HEK293 (cell line): ENCODE measurements at regions of chr16 and their contacts with region 1.

Region 1: DNA sequence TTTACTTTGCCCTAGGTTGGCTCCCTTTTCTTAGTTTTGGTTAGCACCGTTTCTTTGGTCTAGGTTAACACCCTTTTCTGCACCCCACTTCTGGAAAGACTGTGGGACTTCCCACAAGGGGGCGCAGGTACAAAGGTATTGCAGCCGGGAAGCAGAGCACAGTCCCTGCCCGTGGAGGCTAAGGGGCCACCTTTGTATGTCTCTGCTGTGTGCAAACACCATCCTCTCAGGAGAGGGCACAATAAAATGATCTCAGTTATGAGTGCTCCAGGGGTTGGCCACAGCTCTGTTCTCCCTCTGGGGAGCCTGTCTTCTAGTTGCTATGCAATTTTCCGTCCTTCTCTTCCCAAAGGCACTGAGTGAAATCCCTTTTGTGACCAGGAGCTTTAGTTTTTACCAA is 28.4 kb upstream of the TMC5 start:
- H3K4me3 ChIP-seq: no peak overlapping the region
- H3K27ac ChIP-seq: no peak overlapping the region
- H3K4me1 ChIP-seq: peaks cover 3% of the 10 kb centered on the region
- CTCF ChIP-seq: peak; percentile 64

Region 2: GRCh38 chr16:19400697-19401096 is 11.5 kb after region 1 on chr16:
- CTCF ChIA-PET with region 1: interaction called, 14 read pairs
- POLR2A ChIA-PET with region 1: no interaction called
- H3K4me3 ChIP-seq: no peak overlapping the region
- H3K27ac ChIP-seq: no peak overlapping the region
- H3K4me1 ChIP-seq: no peaks in the 10 kb centered on the region; the same call in 1 of the 2 replicates
- CTCF ChIP-seq: no peak

Region 3: GRCh38 chr16:19507867-19508266 is 118.6 kb after region 1 on chr16:
- CTCF ChIA-PET with region 1: interaction called, 49 read pairs
- POLR2A ChIA-PET with region 1: no interaction called
- H3K4me3 ChIP-seq: no peak overlapping the region
- H3K27ac ChIP-seq: no peak overlapping the region
- H3K4me1 ChIP-seq: no peaks in the 10 kb centered on the region
- CTCF ChIP-seq: no peak